ENCODE measurements at regions of chr6 and their contacts with region 1.

Region 1: GRCh38 chr6:106648651-106649308 is 19.4 kb downstream of the QRSL1 start:
- DNase-seq: no peak
- H3K4me3 ChIP-seq: no peak overlapping the region
- H3K27ac ChIP-seq: no peak overlapping the region
- H3K4me1 ChIP-seq: peaks cover 21% of the 10 kb centered on the region
- H3K27me3 ChIP-seq: no peaks in the 10 kb centered on the region
- CTCF ChIP-seq: no peak

Region 2: GRCh38 chr6:106702451-106703110 is 53.8 kb after region 1 on chr6:
- CTCF ChIA-PET with region 1: no interaction called
- POLR2A ChIA-PET with region 1: interaction called, 10 read pairs
- intact Hi-C with region 1: no loop called
- DNase-seq: no peak
- H3K4me3 ChIP-seq: no peak overlapping the region
- H3K27ac ChIP-seq: no peak overlapping the region
- H3K4me1 ChIP-seq: no peaks in the 10 kb centered on the region
- H3K27me3 ChIP-seq: no peaks in the 10 kb centered on the region
- CTCF ChIP-seq: no peak

Measured in A673 (cell line).